AG04449 (cell line): ENCODE measurements at regions of chr10 and their contacts with region 1.

Region 1: GRCh38 chr10:33193057-33193700 is 141.3 kb downstream of the NRP1 start:
- DNase-seq: no peak
- H3K4me3 ChIP-seq: no peak overlapping the region
- CTCF ChIP-seq: peak; percentile 73

Region 2: GRCh38 chr10:33180390-33180789 is 12.8 kb before region 1 on chr10:
- CTCF ChIA-PET with region 1: interaction called, 38 read pairs
- POLR2A ChIA-PET with region 1: no interaction called
- DNase-seq: no peak
- H3K4me3 ChIP-seq: no peak overlapping the region
- CTCF ChIP-seq: no peak

Region 3: GRCh38 chr10:33248638-33249037 is 55.5 kb after region 1 on chr10:
- CTCF ChIA-PET with region 1: interaction called, 11 read pairs
- POLR2A ChIA-PET with region 1: no interaction called
- DNase-seq: peak; percentile 74
- H3K4me3 ChIP-seq: no peak overlapping the region
- CTCF ChIP-seq: no peak

Region 4: GRCh38 chr10:33273295-33274002 is 80.3 kb after region 1 on chr10:
- CTCF ChIA-PET with region 1: interaction called, 13 read pairs
- POLR2A ChIA-PET with region 1: no interaction called
- DNase-seq: peak; percentile 97
- H3K4me3 ChIP-seq: peak overlapping the region; percentile 29
- CTCF ChIP-seq: peak; percentile 41

Region 5: GRCh38 chr10:33314811-33315561 is 121.8 kb after region 1 on chr10:
- CTCF ChIA-PET with region 1: interaction called, 14 read pairs
- POLR2A ChIA-PET with region 1: no interaction called
- DNase-seq: no peak
- H3K4me3 ChIP-seq: no peak overlapping the region
- CTCF ChIP-seq: no peak

Region 6: GRCh38 chr10:34637418-34637911 is 1444.3 kb after region 1 on chr10:
- CTCF ChIA-PET with region 1: interaction called, 32 read pairs
- POLR2A ChIA-PET with region 1: no interaction called
- DNase-seq: no peak
- H3K4me3 ChIP-seq: no peak overlapping the region
- CTCF ChIP-seq: peak; percentile 93